Left lung (tissue), 14 donors: ENCODE measurements at regions of chr11 and their contacts with region 1.

Region 1: GRCh38 chr11:69699213-69699612 is 4.6 kb downstream of the FGF19 start:
- DNase-seq: no peak
- ATAC-seq: no peak
- H3K4me3 ChIP-seq: no peak overlapping the region
- H3K27ac ChIP-seq: no peak overlapping the region
- H3K4me1 ChIP-seq: peaks cover 4 to 13% of the 10 kb centered on the region in 2 donors
- H3K27me3 ChIP-seq: peaks cover 34 to 95% of the 10 kb centered on the region in 2 donors
- CTCF ChIP-seq: no peak

Region 2: DNA sequence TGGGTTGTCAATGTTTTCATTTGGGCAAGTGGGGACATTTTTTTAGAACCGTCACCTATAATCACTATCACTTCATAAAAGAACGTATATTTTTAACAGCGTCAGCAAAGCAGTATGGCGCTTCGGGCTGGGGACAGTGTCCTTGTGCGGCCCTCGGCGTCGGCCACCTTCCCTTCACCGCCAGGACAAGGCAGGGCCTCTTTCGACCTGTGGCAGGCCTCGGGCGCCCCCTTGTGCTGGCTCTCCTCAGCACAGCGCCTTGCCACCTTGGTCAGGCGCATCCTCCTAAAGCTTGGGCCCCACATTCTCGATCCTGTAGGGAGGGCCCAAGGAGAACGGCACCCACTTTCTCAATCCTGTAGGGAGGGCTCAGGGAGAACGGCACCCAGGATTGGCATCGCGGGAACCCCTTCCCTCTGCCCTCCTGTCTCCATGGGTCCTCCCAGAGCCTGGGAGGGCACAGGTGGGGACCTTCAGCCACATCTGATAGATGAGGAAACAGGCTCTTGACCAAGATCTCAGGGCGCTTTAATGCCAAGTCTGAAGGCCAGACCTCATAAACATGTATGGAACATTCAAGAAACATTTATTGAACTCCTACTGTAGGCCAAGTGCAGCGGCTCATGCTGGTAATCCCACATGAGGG is 492.4 kb after region 1 on chr11:
- intact Hi-C with region 1: loop called in 1 of 2 experiments (anchors 10 kb)
- DNase-seq: peak; percentile 49 to 93 (median 72)
- ATAC-seq: peak; percentile 96
- H3K4me3 ChIP-seq: no peak overlapping the region
- H3K27ac ChIP-seq: no peak overlapping the region
- H3K4me1 ChIP-seq: no peaks in the 10 kb centered on the region
- H3K27me3 ChIP-seq: peaks cover 0 to 29% of the 10 kb centered on the region in 2 donors
- CTCF ChIP-seq: peak; percentile 83 to 85